ENCODE measurements at regions of chr7 and their contacts with region 1.

Region 1: GRCh38 chr7:116809636-116810266 is 52.6 kb upstream of the CAPZA2 start:
- DNase-seq: no peak
- ATAC-seq: peak; percentile 71 to 77
- H3K4me3 ChIP-seq: no peak overlapping the region
- H3K27ac ChIP-seq: no peak overlapping the region
- H3K4me1 ChIP-seq: no peaks in the 10 kb centered on the region
- H3K27me3 ChIP-seq: no peaks in the 10 kb centered on the region

Region 2: GRCh38 chr7:116173051-116174028 is 636.4 kb before region 1 on chr7:
- intact Hi-C with region 1: loop called in 1 of 4 experiments (anchors 10 kb)
- DNase-seq: no peak
- ATAC-seq: peak; percentile 29 to 55
- H3K4me3 ChIP-seq: no peak overlapping the region
- H3K27ac ChIP-seq: no peak overlapping the region
- H3K4me1 ChIP-seq: no peaks in the 10 kb centered on the region
- H3K27me3 ChIP-seq: no peaks in the 10 kb centered on the region

Region 3: DNA sequence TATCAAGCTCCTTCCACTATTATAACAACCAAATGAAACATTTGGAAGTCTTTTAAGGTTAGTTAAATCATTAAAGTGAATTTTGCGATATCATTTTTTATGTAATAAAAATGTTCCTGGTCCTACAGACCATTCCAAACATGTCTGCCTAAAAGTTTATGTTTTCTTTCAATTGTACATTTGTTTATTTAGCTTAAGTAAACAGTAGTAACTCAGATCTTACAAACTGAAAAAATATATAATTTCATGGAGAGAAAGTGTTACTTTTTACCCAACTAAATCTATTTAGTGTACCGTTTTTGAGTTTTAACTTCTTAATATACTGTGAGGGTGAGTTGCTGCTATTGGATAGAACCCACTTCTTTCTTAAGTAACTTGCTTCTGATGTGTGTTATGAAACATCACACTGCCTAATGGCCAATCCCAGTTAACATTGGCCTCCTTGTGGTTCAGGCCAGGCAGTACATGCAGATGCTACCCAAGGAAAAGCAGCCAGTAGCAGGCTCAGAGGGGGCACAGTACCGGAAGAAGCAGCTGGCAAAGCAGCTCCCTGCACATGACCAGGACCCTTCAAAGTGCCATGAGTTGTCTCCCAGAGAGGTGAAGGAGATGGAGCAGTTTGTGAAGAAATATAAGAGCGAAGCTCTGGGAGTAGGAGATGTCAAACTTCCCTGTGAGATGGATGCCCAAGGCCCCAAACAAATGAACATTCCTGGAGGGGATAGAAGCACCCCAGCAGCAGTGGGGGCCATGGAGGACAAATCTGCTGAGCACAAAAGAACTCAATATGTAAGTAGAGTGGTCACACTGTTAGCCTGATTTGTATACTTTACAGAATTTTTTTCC is 559.8 kb before region 1 on chr7:
- intact Hi-C with region 1: loop called in 3 of 4 experiments (anchors 5 to 10 kb)
- DNase-seq: no peak
- ATAC-seq: peak in 1 of 2 donors; percentile 26
- H3K4me3 ChIP-seq: no peak overlapping the region
- H3K27ac ChIP-seq: no peak overlapping the region
- H3K4me1 ChIP-seq: no peaks in the 10 kb centered on the region
- H3K27me3 ChIP-seq: no peaks in the 10 kb centered on the region

Region 4: DNA sequence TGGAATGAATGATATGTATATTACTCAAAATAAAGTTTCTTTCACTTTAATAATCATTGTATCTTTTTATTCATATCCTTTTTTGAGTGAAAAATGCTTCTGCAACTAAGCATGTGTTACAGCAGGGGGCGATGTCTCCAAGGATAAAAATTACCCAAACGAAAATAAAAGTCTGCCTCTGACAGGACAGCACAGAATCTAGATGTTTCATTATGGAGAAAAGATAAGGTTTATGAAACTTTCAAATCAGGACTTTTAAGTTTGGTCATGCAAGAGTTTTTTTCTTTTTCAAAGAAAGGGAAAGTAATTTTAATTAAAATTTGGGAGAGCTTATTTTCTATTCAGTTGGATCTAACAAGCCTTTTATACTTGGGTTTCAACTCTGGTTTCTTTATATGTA is 551.0 kb before region 1 on chr7:
- intact Hi-C with region 1: loop called (anchors 5 to 10 kb)
- DNase-seq: no peak
- ATAC-seq: peak; percentile 54 to 59
- H3K4me3 ChIP-seq: no peak overlapping the region
- H3K27ac ChIP-seq: no peak overlapping the region
- H3K4me1 ChIP-seq: no peaks in the 10 kb centered on the region
- H3K27me3 ChIP-seq: no peaks in the 10 kb centered on the region

Region 5: DNA sequence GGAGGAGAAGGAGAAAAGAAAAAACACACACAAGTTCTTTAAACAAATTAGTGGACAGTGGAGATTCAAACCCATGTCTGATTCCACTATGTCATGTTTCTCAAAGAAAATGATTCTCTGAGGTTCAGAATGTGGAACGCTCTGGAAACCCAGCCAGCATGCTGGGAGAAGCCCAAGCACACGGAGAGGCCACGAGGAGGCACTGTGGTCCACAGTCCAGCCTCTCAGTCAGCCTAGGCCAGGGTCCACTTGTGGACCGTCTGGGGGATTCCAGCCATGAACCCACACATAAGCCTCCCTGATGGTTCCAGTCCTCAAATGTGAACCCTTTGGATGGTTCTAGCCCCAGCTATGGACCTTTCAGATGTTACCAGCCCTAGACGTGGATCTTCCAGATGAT is 211.5 kb before region 1 on chr7:
- intact Hi-C with region 1: loop called (anchors 5 kb)
- DNase-seq: no peak
- ATAC-seq: peak; percentile 41 to 45
- H3K4me3 ChIP-seq: no peak overlapping the region
- H3K27ac ChIP-seq: no peak overlapping the region
- H3K4me1 ChIP-seq: no peaks in the 10 kb centered on the region
- H3K27me3 ChIP-seq: no peaks in the 10 kb centered on the region

Region 6: DNA sequence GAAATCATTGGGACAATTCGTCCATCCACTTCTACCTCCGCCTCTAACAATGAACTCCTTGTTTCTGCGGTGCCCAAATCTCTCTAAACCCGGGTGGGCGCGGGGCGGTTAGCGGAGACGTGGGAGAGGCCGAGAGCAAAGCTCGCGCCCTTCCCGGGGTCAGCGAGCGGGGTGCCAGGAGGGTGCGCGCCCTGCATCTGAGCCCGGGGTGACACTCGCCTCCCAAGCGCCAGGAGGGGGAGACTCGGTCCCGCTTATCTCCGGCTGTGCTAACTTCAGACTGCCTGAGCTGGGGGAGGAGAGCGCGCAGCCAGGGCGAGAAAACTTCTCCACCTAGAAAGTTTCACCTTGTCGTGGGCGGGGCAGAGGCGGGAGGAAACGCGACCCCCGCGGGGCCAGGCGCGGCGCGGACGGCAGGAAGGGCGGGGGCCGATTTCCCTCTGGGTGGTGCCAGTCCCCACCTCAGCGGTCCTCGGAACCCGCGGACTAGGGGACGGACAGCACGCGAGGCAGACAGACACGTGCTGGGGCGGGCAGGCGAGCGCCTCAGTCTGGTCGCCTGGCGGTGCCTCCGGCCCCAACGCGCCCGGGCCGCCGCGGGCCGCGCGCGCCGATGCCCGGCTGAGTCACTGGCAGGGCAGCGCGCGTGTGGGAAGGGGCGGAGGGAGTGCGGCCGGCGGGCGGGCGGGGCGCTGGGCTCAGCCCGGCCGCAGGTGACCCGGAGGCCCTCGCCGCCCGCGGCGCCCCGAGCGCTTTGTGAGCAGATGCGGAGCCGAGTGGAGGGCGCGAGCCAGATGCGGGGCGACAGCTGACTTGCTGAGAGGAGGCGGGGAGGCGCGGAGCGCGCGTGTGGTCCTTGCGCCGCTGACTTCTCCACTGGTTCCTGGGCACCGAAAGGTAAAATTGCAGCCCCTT is 137.8 kb before region 1 on chr7 and contains the start of gene MET:
- intact Hi-C with region 1: loop called in 1 of 4 experiments (anchors 10 kb)
- DNase-seq: peak; percentile 72 to 86 (median 85)
- ATAC-seq: peak; percentile 90 to 94
- H3K4me3 ChIP-seq: peak within 1 kb of the TSS; percentile 55
- H3K27ac ChIP-seq: peak within 1 kb of the TSS; percentile 61
- H3K4me1 ChIP-seq: no peaks in the 10 kb centered on the region
- H3K27me3 ChIP-seq: no peaks in the 10 kb centered on the region
- total RNA-seq, gene MET: 8.4 to 20.0 (median 14.7) TPM